Posterior cingulate gyrus (tissue), 11 donors: ENCODE measurements at regions of chr2 and their contacts with region 1.

Region 1: GRCh38 chr2:102020596-102021181 is 28.9 kb downstream of the IL1R2 start:
- DNase-seq: peak; percentile 49 to 97 (median 86)

Region 2: DNA sequence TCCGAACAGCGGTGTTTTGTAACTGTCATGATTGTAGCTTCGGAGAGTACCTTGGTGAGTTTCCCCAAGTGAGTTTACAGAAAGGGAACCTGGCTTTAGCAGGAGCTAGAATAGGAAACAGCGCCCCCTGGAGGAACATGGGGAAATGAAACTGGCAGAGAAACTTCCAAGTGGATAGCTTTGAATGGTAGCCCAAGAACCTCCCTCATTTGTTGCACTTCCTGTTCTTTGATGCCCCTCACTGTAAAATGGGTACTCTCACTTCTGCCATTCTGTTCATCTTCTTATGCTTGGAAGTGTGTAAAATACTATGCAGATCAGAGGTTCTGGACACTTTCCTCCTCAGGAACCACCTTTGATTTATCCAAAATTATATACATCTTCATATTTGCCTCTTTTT is 1639.4 kb before region 1 on chr2:
- intact Hi-C with region 1: no loop called
- DNase-seq: peak in 8 of 10 donors; percentile 64 to 93 (median 80)

Region 3: DNA sequence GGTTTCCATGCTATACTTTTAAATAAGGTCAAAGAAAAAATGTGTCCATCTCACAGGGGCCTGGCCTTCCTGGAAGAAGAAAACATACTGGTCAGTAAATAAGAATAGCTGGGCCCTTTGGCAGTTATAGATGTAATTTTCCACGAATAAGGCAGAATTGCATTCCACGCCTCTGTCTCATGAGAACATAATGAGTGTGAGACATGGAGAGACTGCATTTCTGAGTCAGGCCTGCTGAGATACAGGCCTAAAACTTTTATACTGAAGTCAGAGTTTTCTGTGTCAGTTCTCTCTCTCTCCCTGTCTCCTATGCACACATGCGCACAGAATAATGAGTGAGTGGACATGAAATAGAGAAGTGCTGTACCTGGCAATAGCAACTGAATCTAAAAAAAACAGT is 101.4 kb after region 1 on chr2:
- intact Hi-C with region 1: no loop called
- DNase-seq: no peak

Region 4: GRCh38 chr2:102166189-102166845 is 145.6 kb after region 1 on chr2:
- intact Hi-C with region 1: loop called (anchors 2 kb)
- DNase-seq: no peak

Region 5: DNA sequence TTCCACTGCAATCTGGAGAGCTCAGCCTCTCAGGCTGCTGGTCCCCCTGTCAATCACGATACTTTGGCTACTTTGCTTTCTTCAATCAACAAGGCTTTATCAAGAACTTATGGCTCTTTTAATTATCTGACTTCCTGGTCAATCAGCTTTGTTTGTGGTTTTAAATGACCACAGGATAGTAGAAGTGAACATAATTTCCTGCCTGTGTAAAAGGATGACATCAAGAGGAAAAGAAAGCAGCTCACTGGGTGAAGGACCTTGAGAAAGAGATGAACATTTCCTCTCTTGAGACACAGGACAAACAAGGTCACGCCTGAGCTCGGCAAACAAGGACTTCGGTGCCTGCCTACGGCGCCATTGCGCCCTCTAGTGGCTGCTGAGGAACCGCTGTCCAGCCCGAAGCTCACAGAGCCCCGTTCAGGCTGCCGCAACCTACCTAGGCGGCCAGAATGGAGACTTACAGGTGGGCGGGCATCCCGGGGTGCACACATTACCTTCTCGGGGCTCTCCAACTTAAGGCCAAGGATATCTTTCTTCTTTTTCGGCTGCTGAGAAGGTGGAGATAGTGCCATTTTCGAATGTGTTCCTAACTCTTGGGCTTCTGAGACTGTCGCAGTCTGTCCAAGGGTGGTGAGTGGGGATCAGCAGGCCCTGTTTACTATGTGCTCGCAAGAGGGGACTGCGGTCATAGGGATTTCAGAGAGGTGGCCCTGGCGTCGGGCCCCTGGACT is 220.1 kb after region 1 on chr2:
- intact Hi-C with region 1: loop called (anchors 1 kb)
- DNase-seq: peak; percentile 70 to 98 (median 89)

Region 6: GRCh38 chr2:102301867-102302362 is 281.2 kb after region 1 on chr2:
- intact Hi-C with region 1: no loop called
- DNase-seq: no peak

Region 7: GRCh38 chr2:102355526-102356380 is 335.1 kb after region 1 on chr2 and contains the start of gene IL18R1:
- intact Hi-C with region 1: loop called (anchors 5 kb)
- DNase-seq: peak; percentile 25 to 92 (median 56)

Region 8: GRCh38 chr2:102449370-102449974 is 428.8 kb after region 1 on chr2:
- intact Hi-C with region 1: loop called (anchors 2 kb)
- DNase-seq: peak in 8 of 10 donors; percentile 11 to 87 (median 56)